ENCODE measurements at regions of chr7 and their contacts with region 1.

Region 1: GRCh38 chr7:134458806-134459698 is at the start of gene AKR1B1:
- DNase-seq: peak; percentile 74 to 93
- H3K4me3 ChIP-seq: peak within 1 kb of the TSS; percentile 83 to 92 (median 87)
- H3K27ac ChIP-seq: no peak within 1 kb of the TSS; the same call in 1 of the 2 replicates
- H3K4me1 ChIP-seq: peaks cover 0 to 4% (median 1%) of the 10 kb centered on the region in 4 experiments; a peak in 4 of 7 replicates
- H3K27me3 ChIP-seq: peaks cover 0 to 2% (median 0%) of the 10 kb centered on the region in 4 experiments; a peak in 2 of 7 replicates
- CTCF ChIP-seq: peak; percentile 44 to 55 (median 48)
- EP300 ChIP-seq: 0 out of 3 replicates have a peak, but pooled peaks of 1 of the 2 experiments have one; percentile 7
- POLR2A ChIP-seq: peak; percentile 60 to 89
- RAD21 ChIP-seq: no peak; a peak in 1 of 4 replicates
- total RNA-seq, gene AKR1B1: 189 and 195 TPM in 2 replicates

Region 2: GRCh38 chr7:134448700-134449229 is 10.3 kb before region 1 on chr7:
- CTCF ChIA-PET with region 1: interaction called, 22 read pairs
- POLR2A ChIA-PET with region 1: interaction called, 12 read pairs
- DNase-seq: no peak
- H3K4me3 ChIP-seq: no peak overlapping the region
- H3K27ac ChIP-seq: no peak overlapping the region
- H3K4me1 ChIP-seq: no peaks in the 10 kb centered on the region; a peak in 1 of 7 replicates
- H3K27me3 ChIP-seq: no peaks in the 10 kb centered on the region
- CTCF ChIP-seq: no peak
- EP300 ChIP-seq: no peak
- POLR2A ChIP-seq: no peak
- RAD21 ChIP-seq: no peak

Region 3: GRCh38 chr7:134470864-134471263 is 11.8 kb after region 1 on chr7:
- CTCF ChIA-PET with region 1: interaction called, 6 read pairs
- POLR2A ChIA-PET with region 1: interaction called, 10 read pairs
- DNase-seq: no peak
- H3K4me3 ChIP-seq: no peak overlapping the region
- H3K27ac ChIP-seq: no peak overlapping the region
- H3K4me1 ChIP-seq: no peaks in the 10 kb centered on the region
- H3K27me3 ChIP-seq: no peaks in the 10 kb centered on the region
- CTCF ChIP-seq: no peak
- EP300 ChIP-seq: no peak
- POLR2A ChIP-seq: no peak
- RAD21 ChIP-seq: no peak

Region 4: DNA sequence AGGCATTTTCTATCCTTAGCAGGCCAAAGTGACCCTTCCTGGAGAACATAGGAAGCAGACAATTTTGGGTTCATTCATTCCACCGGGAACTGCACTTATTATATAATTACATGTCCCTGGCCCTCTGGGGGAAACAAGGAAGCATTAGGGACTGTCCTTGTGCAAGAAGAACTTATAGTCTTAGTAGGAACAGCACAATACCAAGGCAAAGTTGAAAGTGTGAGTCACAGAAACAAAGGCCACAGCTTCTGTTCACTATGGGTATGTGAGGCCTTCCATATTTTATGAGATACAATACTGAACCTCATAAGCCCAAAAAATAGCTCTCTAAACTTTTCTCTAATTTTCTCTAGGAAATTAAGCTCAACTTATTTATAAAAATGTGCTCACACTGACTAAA is 50.0 kb after region 1 on chr7:
- CTCF ChIA-PET with region 1: interaction called, 40 read pairs
- POLR2A ChIA-PET with region 1: interaction called, 3 read pairs
- DNase-seq: no peak
- H3K4me3 ChIP-seq: no peak overlapping the region
- H3K27ac ChIP-seq: no peak overlapping the region
- H3K4me1 ChIP-seq: no peaks in the 10 kb centered on the region
- H3K27me3 ChIP-seq: no peaks in the 10 kb centered on the region
- CTCF ChIP-seq: no peak
- EP300 ChIP-seq: no peak
- POLR2A ChIP-seq: no peak
- RAD21 ChIP-seq: no peak

Region 5: GRCh38 chr7:134547397-134548054 is 88.5 kb after region 1 on chr7:
- CTCF ChIA-PET with region 1: interaction called, 21 read pairs
- POLR2A ChIA-PET with region 1: interaction called, 3 read pairs
- DNase-seq: peak; percentile 49 to 80
- H3K4me3 ChIP-seq: peak overlapping the region; percentile 22 to 58 (median 48)
- H3K27ac ChIP-seq: peak overlapping the region; percentile 36; the same call in 1 of the 2 replicates
- H3K4me1 ChIP-seq: peaks cover 8 to 14% (median 9%) of the 10 kb centered on the region in 4 experiments
- H3K27me3 ChIP-seq: no peaks in the 10 kb centered on the region; a peak in 1 of 7 replicates
- CTCF ChIP-seq: peak; percentile 45 to 76 (median 49); a peak in 3 of 4 replicates
- EP300 ChIP-seq: no peak
- POLR2A ChIP-seq: no peak
- RAD21 ChIP-seq: peak; percentile 30 to 37; a peak in 2 of 4 replicates

Region 6: DNA sequence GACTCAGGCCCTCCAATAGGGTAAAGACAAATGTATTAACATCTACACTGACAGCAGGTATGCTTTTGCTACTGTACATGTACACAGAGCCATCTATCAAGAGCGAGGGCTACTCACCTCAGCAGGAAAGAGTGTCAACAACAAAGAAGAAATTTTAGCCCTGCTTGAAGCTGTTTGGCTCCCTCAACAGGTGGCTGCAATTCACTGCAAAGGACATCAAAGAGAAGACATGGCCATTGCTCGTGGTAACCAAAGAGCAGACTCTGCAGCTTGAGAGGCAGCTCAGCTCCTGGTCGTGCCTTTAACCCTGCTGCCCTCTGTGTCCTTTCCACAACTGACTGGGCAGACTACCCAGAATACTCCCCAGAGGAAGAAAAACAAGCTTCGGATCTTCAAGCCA is 94.9 kb after region 1 on chr7:
- CTCF ChIA-PET with region 1: interaction called, 21 read pairs
- POLR2A ChIA-PET with region 1: no interaction called
- DNase-seq: no peak
- H3K4me3 ChIP-seq: no peak overlapping the region
- H3K27ac ChIP-seq: no peak overlapping the region
- H3K4me1 ChIP-seq: no peaks in the 10 kb centered on the region; a peak in 1 of 7 replicates
- H3K27me3 ChIP-seq: no peaks in the 10 kb centered on the region
- CTCF ChIP-seq: peak; percentile 20 to 64 (median 35); a peak in 3 of 4 replicates
- EP300 ChIP-seq: no peak
- POLR2A ChIP-seq: no peak
- RAD21 ChIP-seq: peak; percentile 49 to 56